ENCODE measurements at regions of chr2 and their contacts with region 1.

Region 1: DNA sequence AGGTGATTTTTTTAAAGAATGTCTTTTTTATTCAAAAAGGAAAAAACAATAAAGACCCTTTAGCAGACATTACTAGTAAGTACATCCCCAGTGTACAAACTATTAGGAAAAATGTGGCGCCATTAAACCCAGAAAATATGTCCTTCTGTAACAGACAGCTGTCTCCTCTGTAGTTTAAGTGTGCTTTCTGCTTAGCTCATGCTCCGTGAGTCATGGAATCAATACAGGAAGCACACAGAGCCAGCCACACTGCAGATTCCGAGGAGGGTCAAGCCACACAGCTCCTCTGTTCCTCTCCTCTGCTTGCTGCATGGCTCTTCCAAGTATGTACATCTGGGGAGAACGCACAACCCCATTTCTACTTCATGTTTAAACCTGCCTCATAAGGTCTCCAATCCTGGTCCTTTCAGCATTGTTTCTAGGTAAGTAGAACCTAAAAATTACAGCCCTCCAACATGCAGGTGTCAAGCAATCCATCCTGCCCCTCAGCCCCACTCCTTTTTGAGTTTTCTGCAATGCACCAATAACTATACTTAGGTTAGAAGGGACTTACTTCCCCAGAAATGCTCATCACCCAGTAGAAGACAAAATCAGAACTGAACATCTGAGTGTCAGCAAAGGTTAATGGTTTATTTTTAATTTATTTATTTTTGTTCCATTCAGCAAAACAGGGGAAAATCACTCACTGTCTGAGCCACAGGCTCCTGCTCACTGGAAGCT is 37.5 kb downstream of the ACVR1 start:
- DNase-seq: peak; percentile 48 to 66 (median 50)
- ATAC-seq: peak; percentile 44 to 82 (median 78)
- H3K4me3 ChIP-seq: peak overlapping the region in 10 of 12 donors; percentile 10 to 52 (median 41)
- H3K27ac ChIP-seq: peak overlapping the region; percentile 11 to 93 (median 79)
- H3K4me1 ChIP-seq: peaks cover 23 to 80% (median 67%) of the 10 kb centered on the region in 12 donors
- H3K27me3 ChIP-seq: no peaks in the 10 kb centered on the region
- CTCF ChIP-seq: no peak
- POLR2A ChIP-seq: no peak

Region 2: DNA sequence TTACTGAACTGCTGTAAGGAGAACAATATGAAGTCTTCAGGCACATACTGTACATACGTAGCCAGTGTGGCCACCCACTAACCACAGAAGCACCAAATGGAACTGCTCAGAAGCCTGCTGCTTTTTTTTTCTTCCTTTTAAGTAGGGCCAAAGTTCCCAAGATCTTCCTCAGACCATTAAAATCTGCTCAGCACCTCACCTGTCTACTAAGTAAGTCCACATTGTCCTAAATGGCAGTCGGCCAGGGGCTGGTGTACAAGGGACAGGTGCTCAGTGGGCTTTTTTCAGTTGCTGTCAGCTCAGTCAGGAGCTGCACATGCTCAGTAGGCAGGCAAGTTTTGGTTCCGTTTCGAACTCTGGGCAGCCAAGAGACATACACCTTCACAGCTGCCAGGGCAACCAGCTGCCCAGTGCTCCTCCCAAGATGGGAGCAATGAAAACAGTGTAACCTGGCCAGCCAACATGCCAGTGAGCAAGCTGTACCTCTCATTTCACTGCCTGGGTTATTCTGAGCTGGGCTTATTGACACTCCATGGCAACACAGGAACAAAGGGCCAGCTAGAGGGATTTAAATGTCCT is 48.6 kb before region 1 on chr2:
- intact Hi-C with region 1: loop called in 5 of 10 experiments (anchors 1 to 5 kb)
- DNase-seq: peak; percentile 42 to 85 (median 70)
- ATAC-seq: peak; percentile 93 to 96 (median 96)
- H3K4me3 ChIP-seq: no peak overlapping the region
- H3K27ac ChIP-seq: peak overlapping the region; percentile 24 to 87 (median 73)
- H3K4me1 ChIP-seq: peaks cover 8 to 73% (median 56%) of the 10 kb centered on the region in 12 donors
- H3K27me3 ChIP-seq: no peaks in the 10 kb centered on the region
- CTCF ChIP-seq: no peak
- POLR2A ChIP-seq: no peak

Region 3: DNA sequence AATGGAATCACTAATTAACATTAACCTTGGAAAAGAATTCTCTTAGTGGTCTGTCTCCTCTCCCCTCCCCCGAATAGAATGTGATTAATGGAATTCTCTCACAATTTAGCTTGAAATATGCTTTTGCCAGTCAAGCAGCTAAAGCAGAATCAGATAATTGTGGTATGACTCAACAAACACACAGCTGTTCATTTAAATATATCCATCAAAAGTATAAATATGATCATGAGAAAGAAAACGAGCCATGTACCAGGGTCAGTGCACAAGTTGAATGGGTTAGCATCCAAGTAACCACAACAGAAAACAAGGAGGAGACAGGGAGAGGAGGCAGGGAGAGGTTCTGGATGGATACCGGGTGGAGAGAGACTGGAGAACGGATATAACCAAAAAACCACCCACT is 29.4 kb before region 1 on chr2:
- intact Hi-C with region 1: loop called in 1 of 10 experiments (anchors 5 kb)
- DNase-seq: no peak
- ATAC-seq: peak in 1 of 4 donors; percentile 52
- H3K4me3 ChIP-seq: no peak overlapping the region
- H3K27ac ChIP-seq: peak overlapping the region in 1 of 12 donors; percentile 4
- H3K4me1 ChIP-seq: peaks cover 0 to 50% (median 28%) of the 10 kb centered on the region in 12 donors
- H3K27me3 ChIP-seq: no peaks in the 10 kb centered on the region
- CTCF ChIP-seq: no peak
- POLR2A ChIP-seq: no peak